ENCODE measurements at regions of chr17 and their contacts with region 1.

Region 1: DNA sequence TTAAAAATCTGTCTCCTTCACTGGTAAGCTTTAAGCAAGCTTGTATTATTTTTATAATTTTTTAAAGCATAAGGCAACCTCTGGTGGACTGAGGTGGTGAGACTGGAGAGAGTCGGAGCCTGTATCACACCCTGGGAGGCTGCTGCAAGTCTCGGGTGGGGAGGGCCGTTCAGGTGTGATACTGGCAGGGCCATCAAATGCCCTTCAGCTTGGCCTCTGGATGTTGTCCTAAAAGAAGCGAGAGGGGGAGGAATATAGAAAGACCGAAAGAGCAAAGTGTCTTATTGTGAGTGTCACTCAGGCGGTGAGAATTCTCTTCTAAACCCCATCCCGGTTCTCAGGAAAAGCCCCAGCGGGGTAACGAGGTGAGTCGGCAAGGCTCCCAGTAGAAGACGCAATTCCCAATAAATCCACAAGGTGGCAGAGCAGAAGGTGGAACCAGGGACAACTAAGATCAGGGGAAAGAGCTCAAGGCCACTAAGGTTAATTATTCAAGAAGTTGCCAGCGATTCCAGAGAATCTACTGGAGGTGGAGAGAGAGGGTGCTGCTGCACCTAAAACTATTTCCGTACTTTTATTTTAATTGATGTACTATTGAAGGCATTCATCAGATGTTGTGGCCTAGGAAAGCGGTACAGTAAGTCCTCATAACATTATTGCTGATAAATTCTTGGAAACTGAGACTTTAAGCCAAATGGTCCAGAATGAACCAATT is 14.1 kb downstream of the C17orf67 start:
- DNase-seq: peak; percentile 79
- H3K4me3 ChIP-seq: no peak overlapping the region
- H3K27ac ChIP-seq: no peak overlapping the region
- H3K4me1 ChIP-seq: peaks cover 24% of the 10 kb centered on the region
- H3K27me3 ChIP-seq: no peaks in the 10 kb centered on the region
- CTCF ChIP-seq: peak; percentile 67 to 80
- POLR2A ChIP-seq: no peak

Region 2: DNA sequence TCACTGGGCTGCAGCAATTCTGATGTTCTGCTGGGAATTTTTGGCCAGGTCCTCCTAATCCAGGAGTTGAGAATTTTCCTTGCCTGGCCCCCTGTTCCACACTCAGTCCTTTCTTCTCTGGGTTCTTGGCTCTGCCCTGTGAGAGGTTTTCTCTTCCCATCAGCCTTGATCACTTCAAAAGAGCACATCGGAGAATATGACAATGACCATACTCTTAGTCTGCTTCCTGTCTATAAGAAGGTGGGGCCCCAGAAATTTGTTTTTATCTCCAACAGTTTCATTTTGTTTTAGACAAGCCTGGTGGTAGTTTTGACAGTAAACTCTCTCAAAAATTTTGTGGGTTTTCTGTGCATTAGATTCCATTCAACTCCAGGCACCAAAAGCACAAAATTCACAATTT is 56.6 kb before region 1 on chr17:
- CTCF ChIA-PET with region 1: no interaction called
- POLR2A ChIA-PET with region 1: no interaction called
- dilution Hi-C with region 1: no loop called
- intact Hi-C with region 1: no loop called
- DNase-seq: no peak
- H3K4me3 ChIP-seq: no peak overlapping the region
- H3K27ac ChIP-seq: no peak overlapping the region
- H3K4me1 ChIP-seq: no peaks in the 10 kb centered on the region
- H3K27me3 ChIP-seq: peaks cover 2 to 7% of the 10 kb centered on the region in 2 experiments
- CTCF ChIP-seq: no peak
- POLR2A ChIP-seq: no peak

Region 3: DNA sequence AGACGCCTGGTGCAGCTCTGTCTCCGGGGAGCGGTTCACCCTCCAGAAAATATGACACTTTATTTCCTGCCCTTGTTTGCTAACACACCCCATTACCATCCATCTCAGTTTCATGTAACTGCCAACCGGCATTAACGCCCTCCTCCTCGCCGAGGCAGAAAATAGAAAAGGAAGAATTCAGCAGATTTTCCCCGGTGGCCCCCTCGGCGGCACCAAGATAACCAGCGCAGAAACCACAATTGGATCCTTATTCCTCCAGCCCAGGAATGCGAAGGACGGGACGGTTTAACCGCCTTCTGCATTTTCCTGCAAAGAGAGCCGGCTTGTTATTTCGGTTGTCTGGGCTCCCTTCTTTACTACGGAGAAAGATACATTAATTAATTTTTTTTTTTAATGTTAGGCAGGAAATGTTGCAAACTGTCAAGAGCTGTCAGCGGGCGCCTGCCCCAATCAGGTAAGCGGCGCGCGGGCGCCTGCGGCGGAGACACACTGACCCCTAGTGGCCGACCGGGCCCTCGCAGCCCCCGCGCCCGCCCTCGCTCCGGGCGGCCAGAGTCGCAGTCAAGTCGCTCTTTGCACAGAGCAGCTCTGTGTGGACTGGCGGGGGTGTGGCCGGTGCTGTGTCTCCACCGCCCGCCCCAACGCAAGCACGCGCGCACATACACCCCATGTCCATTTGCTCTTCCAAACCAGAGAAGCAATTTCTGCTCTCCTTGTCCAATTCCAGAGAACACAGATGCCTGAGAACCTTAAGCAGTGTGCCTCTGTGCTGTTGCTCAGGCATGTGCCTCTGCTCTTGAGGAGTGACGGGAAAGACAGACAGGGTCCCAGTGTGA is 39.5 kb before region 1 on chr17:
- CTCF ChIA-PET with region 1: interaction called, 14 read pairs
- POLR2A ChIA-PET with region 1: no interaction called
- dilution Hi-C with region 1: no loop called
- intact Hi-C with region 1: no loop called
- DNase-seq: peak; percentile 79
- H3K4me3 ChIP-seq: peak overlapping the region in 2 of 3 experiments; percentile 23 to 54
- H3K27ac ChIP-seq: no peak overlapping the region
- H3K4me1 ChIP-seq: peaks cover 11% of the 10 kb centered on the region
- H3K27me3 ChIP-seq: peaks cover 0 to 5% of the 10 kb centered on the region in 2 experiments
- CTCF ChIP-seq: peak; percentile 96 to 99
- POLR2A ChIP-seq: no peak

Region 4: DNA sequence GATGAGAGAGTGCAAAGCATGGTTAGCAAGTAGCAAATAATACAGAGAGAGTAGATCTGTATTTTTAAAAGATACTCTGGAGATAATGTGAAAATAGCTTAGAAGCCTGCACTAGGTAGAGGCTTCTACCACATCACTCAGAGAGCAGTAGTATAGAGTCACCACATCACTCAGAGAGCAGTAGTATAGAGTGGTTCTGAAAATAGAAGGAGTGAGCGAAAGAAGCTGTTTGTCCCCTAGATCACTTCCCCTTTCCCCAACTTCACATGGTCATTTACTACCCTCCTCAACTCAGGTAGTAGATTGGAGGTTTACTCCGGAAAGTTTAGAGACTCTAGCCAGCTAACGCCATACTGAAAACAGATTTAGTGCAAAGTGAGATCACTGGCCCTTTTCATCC is 31.4 kb after region 1 on chr17:
- CTCF ChIA-PET with region 1: interaction called, 14 read pairs
- POLR2A ChIA-PET with region 1: no interaction called
- dilution Hi-C with region 1: no loop called
- intact Hi-C with region 1: no loop called
- DNase-seq: no peak
- H3K4me3 ChIP-seq: no peak overlapping the region
- H3K27ac ChIP-seq: no peak overlapping the region
- H3K4me1 ChIP-seq: peaks cover 5% of the 10 kb centered on the region
- H3K27me3 ChIP-seq: no peaks in the 10 kb centered on the region
- CTCF ChIP-seq: no peak
- POLR2A ChIP-seq: no peak

Region 5: GRCh38 chr17:56884274-56885062 is 64.9 kb after region 1 on chr17:
- CTCF ChIA-PET with region 1: interaction called, 20 read pairs
- POLR2A ChIA-PET with region 1: no interaction called
- dilution Hi-C with region 1: no loop called
- intact Hi-C with region 1: no loop called
- DNase-seq: no peak
- H3K4me3 ChIP-seq: no peak overlapping the region
- H3K27ac ChIP-seq: no peak overlapping the region
- H3K4me1 ChIP-seq: no peaks in the 10 kb centered on the region
- H3K27me3 ChIP-seq: no peaks in the 10 kb centered on the region
- CTCF ChIP-seq: no peak
- POLR2A ChIP-seq: no peak

Region 6: GRCh38 chr17:56913864-56914640 is 94.5 kb after region 1 on chr17 and contains the start of gene TRIM25:
- CTCF ChIA-PET with region 1: interaction called, 7 read pairs
- POLR2A ChIA-PET with region 1: interaction called, 3 read pairs
- dilution Hi-C with region 1: no loop called
- intact Hi-C with region 1: loop called (anchors 1 kb)
- DNase-seq: peak; percentile 90
- H3K4me3 ChIP-seq: peak within 1 kb of the TSS; percentile 79 to 95 (median 88)
- H3K27ac ChIP-seq: peak within 1 kb of the TSS; percentile 93
- H3K4me1 ChIP-seq: peaks cover 33% of the 10 kb centered on the region
- H3K27me3 ChIP-seq: no peaks in the 10 kb centered on the region
- CTCF ChIP-seq: no peak
- POLR2A ChIP-seq: peak; percentile 100
- total RNA-seq, gene TRIM25: 69.4 and 98.4 TPM in 2 replicates

Region 7: GRCh38 chr17:56948491-56948890 is 128.9 kb after region 1 on chr17:
- CTCF ChIA-PET with region 1: interaction called, 148 read pairs
- POLR2A ChIA-PET with region 1: no interaction called
- dilution Hi-C with region 1: no loop called
- intact Hi-C with region 1: no loop called
- DNase-seq: no peak
- H3K4me3 ChIP-seq: no peak overlapping the region
- H3K27ac ChIP-seq: no peak overlapping the region
- H3K4me1 ChIP-seq: peaks cover 6% of the 10 kb centered on the region
- H3K27me3 ChIP-seq: no peaks in the 10 kb centered on the region
- CTCF ChIP-seq: no peak
- POLR2A ChIP-seq: no peak

Region 8: DNA sequence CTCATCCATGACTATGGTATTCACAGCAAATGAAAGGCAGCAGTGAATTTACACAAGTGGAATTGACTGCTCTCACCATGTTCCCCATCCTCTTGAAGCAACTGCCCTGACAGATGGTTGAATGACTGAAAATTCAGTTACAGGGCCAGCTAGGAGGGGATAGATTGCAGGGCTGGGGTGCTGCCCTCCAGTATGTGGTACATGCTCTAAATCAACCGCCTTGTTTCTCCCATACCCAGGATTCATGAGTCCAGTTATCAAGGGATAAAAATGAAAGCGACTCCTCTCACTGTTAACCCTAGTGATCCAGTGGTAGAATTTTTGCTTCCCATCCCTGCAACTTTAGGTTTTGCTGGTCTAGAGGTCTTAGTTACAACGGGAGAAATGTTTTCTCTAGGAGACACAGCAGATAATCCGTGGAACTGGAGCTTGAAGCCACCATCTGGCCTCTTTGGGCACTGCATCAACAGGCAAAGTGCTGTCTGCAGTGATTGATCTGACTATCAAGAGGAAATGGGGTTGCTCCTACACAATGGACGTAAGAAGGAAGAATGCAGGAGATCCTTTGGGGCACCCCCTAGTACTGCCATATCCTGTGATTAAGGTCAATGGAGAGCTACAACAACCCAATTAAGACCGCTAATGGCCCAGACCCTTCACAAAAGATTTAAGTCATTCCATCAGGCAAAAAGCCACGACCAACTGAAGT is 190.3 kb after region 1 on chr17:
- CTCF ChIA-PET with region 1: interaction called, 7 read pairs
- POLR2A ChIA-PET with region 1: no interaction called
- dilution Hi-C with region 1: no loop called
- intact Hi-C with region 1: loop called (anchors 1 kb)
- DNase-seq: peak; percentile 73
- H3K4me3 ChIP-seq: no peak overlapping the region
- H3K27ac ChIP-seq: no peak overlapping the region
- H3K4me1 ChIP-seq: peaks cover 4% of the 10 kb centered on the region
- H3K27me3 ChIP-seq: peaks cover 3 to 6% of the 10 kb centered on the region in 2 experiments
- CTCF ChIP-seq: peak; percentile 66 to 73
- POLR2A ChIP-seq: no peak

Measured in endothelial cell of umbilical vein (primary cell).